T-cell (primary cell): ENCODE measurements at regions of chr4 and their contacts with region 1.

Region 1: GRCh38 chr4:6250235-6250983 is 19.2 kb upstream of the WFS1 start:
- DNase-seq: peak in 6 of 35 experiments; percentile 10 to 84 (median 20)
- ATAC-seq: peak; percentile 16 to 54 (median 41)
- H3K4me3 ChIP-seq: no peak overlapping the region
- H3K4me3 Mint-ChIP-seq: no peak overlapping the region
- H3K27ac ChIP-seq: no peak overlapping the region
- H3K27ac Mint-ChIP-seq: no peak overlapping the region
- H3K4me1 ChIP-seq: peaks cover 0 to 3% of the 10 kb centered on the region in 2 experiments
- H3K4me1 Mint-ChIP-seq: peaks cover 0 to 5% (median 2%) of the 10 kb centered on the region in 3 donors
- H3K27me3 ChIP-seq: peaks cover 5 to 44% of the 10 kb centered on the region in 2 experiments
- H3K27me3 Mint-ChIP-seq: peaks cover 46 to 54% of the 10 kb centered on the region in 2 donors

Region 2: DNA sequence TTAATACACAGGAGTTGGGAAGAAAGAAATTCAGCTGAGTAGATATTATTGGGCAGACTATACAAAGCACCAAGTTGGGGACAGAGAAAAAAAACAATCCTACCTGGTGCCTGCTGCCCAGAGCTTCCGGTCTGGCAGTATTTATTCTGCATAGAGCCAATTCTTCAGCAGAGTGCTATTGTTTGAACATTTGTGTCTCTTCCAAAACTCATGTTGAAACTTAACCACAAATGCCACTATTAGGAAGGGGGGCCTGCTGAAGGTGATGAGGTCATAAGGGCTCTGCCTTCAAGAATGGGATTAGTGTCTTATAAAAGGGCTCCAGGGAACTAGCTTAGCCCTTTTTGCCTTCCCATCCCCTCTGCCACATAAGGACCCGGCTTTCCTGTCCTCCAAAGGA is 678.3 kb before region 1 on chr4:
- CTCF ChIA-PET with region 1: no interaction called
- POLR2A ChIA-PET with region 1: no interaction called
- DNase-seq: no peak
- ATAC-seq: no peak
- H3K4me3 ChIP-seq: no peak overlapping the region
- H3K4me3 Mint-ChIP-seq: no peak overlapping the region
- H3K27ac ChIP-seq: no peak overlapping the region
- H3K27ac Mint-ChIP-seq: no peak overlapping the region
- H3K4me1 ChIP-seq: no peaks in the 10 kb centered on the region
- H3K4me1 Mint-ChIP-seq: no peaks in the 10 kb centered on the region
- H3K27me3 ChIP-seq: peaks cover 0 to 3% of the 10 kb centered on the region in 2 experiments
- H3K27me3 Mint-ChIP-seq: no peaks in the 10 kb centered on the region

Region 3: DNA sequence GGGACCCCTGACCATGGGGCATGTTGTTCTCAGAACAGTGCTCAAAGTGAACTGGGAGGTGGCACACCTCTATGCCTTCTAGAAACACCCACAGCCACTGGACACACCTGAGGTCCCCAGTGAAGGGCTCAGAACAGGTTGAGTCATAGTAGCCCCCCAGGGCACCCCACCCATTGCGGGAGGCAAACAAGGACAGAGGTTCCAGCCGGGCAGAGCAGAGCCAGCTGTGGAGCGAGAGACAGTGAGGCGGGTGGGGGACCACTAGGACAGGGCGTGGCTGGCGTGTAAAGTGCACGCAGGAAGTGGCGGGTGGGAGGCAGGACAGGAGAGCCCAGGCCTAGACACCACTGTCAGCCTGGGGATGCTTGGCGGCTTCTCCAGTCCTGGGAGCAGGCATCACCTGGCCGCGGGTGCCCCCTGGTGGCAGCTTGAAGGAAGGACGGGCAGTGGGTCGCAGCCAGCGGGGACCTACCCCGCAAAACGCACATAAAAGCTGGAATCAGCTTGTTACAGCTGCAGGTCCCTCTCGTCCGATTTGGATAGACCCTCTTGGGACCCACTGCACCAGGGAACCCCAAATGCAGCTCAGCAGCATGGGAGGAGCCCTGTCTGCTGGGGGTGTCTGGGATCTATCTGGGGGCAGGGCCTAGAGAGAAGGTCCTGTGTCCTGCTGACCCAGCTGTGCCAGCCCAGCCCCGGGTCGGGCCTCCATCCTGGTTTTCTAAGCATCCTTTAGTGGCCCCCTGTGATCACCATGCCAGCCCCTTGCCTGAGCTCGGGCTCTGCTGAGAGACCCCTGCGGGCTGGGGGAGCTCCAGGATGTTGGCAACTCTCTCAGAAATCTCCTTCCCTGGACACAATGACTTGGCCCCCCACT is 76.9 kb after region 1 on chr4:
- CTCF ChIA-PET with region 1: interaction called, 30 to 32 read pairs
- POLR2A ChIA-PET with region 1: no interaction called
- DNase-seq: peak; percentile 28 to 86 (median 70)
- ATAC-seq: peak; percentile 73 to 76 (median 74)
- H3K4me3 ChIP-seq: no peak overlapping the region
- H3K4me3 Mint-ChIP-seq: no peak overlapping the region
- H3K27ac ChIP-seq: no peak overlapping the region
- H3K27ac Mint-ChIP-seq: no peak overlapping the region
- H3K4me1 ChIP-seq: peaks cover 0 to 10% of the 10 kb centered on the region in 2 experiments
- H3K4me1 Mint-ChIP-seq: peaks cover 0 to 3% (median 0%) of the 10 kb centered on the region in 3 donors
- H3K27me3 ChIP-seq: peaks cover 0 to 80% of the 10 kb centered on the region in 2 experiments
- H3K27me3 Mint-ChIP-seq: peaks cover 30 to 41% of the 10 kb centered on the region in 2 donors